H1 (cell line): ENCODE measurements at regions of chr10 and their contacts with region 1.

Region 1: GRCh38 chr10:11798845-11799735 is 24.1 kb upstream of the PROSER2 start:
- DNase-seq: no peak
- H3K4me3 ChIP-seq: no peak overlapping the region; a peak in 2 of 8 replicates
- H3K27ac ChIP-seq: peak overlapping the region; percentile 2; the same call in 1 of the 2 replicates
- H3K4me1 ChIP-seq: peaks cover 0 to 7% (median 1%) of the 10 kb centered on the region in 4 experiments; a peak in 3 of 7 replicates
- H3K27me3 ChIP-seq: no peaks in the 10 kb centered on the region
- CTCF ChIP-seq: no peak
- EP300 ChIP-seq: no peak
- POLR2A ChIP-seq: no peak
- RAD21 ChIP-seq: no peak

Region 2: DNA sequence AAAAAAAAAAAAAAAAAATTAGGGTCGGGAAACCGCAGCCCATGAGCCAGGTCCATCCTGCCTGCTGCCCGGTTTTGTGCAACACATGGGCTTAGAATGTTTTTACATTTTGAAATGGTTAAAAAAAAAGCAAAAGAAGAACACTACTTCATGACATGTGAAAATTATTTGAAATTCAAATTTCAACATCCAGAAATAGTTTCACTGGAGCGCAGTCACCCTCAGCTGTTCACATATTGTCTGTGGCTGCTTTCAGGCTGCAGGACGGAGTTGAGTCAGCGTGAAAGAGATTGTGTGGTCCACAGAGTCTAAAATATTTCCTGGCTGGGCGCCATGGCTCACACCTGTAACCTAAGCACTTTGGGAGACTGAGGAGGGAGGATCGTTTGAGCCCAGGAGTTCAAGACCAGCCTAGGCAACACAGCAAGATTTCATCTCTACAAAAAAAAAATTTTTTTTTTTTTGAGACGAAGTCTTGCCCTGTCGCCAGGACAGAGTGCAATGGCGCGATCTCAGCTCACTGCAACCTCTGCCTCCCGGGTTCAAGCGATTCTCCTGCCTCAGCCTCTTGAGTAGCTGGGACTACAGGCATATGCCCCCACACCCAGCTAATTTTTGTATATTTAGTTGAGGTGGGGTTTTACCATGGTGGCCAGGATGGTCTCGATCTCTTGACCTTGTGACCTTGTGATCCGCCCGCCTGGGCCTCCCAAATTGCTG is 120.9 kb before region 1 on chr10:
- CTCF ChIA-PET with region 1: no interaction called
- POLR2A ChIA-PET with region 1: no interaction called
- DNase-seq: no peak
- H3K4me3 ChIP-seq: no peak overlapping the region
- H3K27ac ChIP-seq: no peak overlapping the region
- H3K4me1 ChIP-seq: peaks cover 0 to 3% (median 0%) of the 10 kb centered on the region in 4 experiments; a peak in 2 of 7 replicates
- H3K27me3 ChIP-seq: no peaks in the 10 kb centered on the region; a peak in 1 of 7 replicates
- CTCF ChIP-seq: no peak
- EP300 ChIP-seq: no peak
- POLR2A ChIP-seq: no peak
- RAD21 ChIP-seq: no peak

Region 3: GRCh38 chr10:11810313-11810766 is 11.2 kb after region 1 on chr10:
- CTCF ChIA-PET with region 1: interaction called, 12 read pairs
- POLR2A ChIA-PET with region 1: no interaction called
- DNase-seq: no peak
- H3K4me3 ChIP-seq: no peak overlapping the region
- H3K27ac ChIP-seq: no peak overlapping the region
- H3K4me1 ChIP-seq: peaks cover 0 to 7% (median under 1%) of the 10 kb centered on the region in 4 experiments; a peak in 2 of 7 replicates
- H3K27me3 ChIP-seq: no peaks in the 10 kb centered on the region
- CTCF ChIP-seq: no peak
- EP300 ChIP-seq: no peak
- POLR2A ChIP-seq: no peak
- RAD21 ChIP-seq: no peak

Region 4: DNA sequence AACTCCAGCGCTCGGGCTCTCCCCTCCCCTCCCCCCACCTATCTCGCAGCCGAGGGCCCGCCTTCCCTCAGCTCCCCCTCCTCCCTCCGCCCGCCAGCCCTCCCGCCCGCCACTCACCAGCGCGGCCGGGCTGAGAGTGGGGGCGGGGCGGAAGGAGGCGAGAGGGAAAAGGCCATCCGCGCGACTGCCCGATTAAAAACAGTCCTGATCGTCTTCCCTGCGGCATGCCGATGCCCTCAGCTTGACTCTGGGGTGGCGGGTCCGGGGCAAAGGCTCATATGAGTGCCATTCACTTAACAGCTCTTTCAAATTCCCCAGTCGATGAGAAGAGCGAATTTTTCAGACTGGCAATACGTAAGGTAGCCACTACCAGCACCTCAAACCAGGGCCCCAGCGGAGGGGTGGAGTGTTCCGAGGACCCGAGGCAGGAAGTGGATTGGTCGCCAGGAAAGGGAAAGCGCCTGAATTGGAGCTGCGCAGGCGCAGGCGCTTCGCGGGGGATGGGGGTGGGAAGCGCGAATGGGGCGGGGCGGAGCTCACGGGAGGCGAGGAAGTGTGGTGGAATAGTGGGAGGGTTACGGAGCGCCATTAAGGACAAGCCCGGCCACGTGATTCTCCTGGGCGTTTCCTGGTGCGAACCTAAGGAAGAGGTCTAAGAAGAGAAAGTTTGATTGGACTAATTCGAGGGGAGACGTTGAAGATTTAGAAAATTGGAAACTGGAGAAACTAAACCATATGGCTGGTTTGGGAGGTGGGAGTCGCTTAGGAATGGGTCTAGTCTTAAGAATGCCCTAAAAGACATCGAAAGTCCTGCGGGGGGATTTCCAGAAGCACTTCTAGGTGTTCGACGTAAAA is 243.9 kb after region 1 on chr10 and contains the start of gene UPF2:
- CTCF ChIA-PET with region 1: no interaction called
- POLR2A ChIA-PET with region 1: no interaction called
- DNase-seq: peak; percentile 93 to 97
- H3K4me3 ChIP-seq: peak within 1 kb of the TSS; percentile 77 to 98 (median 94)
- H3K27ac ChIP-seq: peak within 1 kb of the TSS; percentile 100
- H3K4me1 ChIP-seq: no peaks in the 10 kb centered on the region; a peak in 2 of 7 replicates
- H3K27me3 ChIP-seq: no peaks in the 10 kb centered on the region
- CTCF ChIP-seq: no peak
- EP300 ChIP-seq: no peak; a peak in 1 of 3 replicates
- POLR2A ChIP-seq: no peak
- RAD21 ChIP-seq: no peak
- total RNA-seq, gene UPF2: 32.8 and 33.6 TPM in 2 replicates